ENCODE measurements at regions of chr18 and their contacts with region 1.

Region 1: DNA sequence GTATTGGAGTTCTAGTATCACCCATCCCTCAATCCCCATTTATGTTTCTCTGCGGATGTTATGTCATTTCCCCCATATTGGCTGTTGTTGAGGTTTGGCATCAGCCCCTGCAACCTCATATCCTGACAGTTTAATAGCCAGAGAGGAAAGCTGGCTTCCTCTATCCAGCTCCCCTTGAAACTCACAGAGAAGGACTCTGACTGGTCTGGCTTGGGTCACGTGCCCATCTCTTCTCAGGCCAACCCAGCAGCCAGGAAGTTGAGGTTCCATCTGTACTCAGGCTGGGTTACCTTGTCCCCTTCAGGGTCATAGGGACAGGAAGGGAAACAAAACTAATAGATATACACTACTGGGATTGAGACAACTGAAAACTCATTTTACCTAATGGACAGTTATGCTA is 148.0 kb upstream of the SLC14A2 start:
- DNase-seq: no peak

Region 2: GRCh38 chr18:45085916-45086624 is 381.2 kb before region 1 on chr18:
- intact Hi-C with region 1: loop called in 1 of 2 experiments (anchors 5 kb)
- DNase-seq: no peak

Region 3: DNA sequence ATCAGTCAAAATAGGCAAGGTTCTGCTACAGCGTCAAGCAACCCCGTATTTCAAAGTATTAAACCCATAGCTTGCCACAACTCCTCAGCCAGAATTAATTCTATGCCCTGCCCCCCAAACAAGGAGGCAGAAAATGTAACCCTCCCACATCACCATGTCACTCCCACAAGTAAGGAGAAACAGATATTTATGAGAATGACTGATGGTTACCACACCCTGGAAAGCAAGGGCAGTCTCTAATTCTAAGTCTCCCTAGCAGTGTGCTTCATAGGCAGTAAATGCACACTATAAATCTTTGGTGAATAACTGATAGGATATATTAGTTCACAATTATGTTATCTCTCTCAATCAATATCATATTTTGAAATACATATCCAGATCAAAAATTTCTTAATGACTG is 80.1 kb before region 1 on chr18:
- intact Hi-C with region 1: no loop called
- DNase-seq: no peak

Region 4: DNA sequence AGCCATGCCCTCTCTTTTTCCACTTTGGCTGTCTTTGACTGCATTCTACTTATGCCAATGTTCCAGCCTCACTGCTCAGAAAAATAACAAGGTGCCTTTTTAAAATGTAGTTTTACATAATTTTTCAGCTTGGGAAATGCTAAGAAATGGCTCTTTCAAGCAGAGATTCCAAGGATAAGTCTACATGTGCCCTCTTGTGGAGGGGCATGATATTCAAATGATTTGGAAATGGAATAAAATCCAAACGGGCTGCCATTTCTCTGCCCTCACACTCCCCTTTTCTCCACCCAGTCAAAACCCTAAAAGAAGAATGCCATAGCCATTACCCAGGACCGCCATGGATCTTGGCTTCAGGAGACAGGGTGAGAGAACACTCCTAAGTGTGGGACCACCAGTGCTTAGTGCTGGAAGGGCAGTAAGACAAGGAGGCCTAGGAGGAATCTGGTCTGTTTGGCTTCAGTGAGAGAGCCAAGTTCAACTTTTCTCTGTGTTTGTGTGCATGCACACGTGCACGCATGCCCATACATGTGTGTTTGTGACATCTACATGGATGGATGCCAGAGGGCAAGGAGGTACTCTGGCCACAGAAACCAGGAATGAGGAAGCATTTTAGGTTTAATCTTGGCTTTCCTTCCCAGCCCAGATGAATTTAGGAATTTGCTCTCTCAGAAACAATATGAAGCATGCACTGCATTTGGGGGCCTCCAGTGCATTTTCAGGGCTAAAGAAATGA is 26.0 kb before region 1 on chr18:
- intact Hi-C with region 1: no loop called
- DNase-seq: no peak

Region 5: GRCh38 chr18:45540125-45540524 is 72.8 kb after region 1 on chr18:
- intact Hi-C with region 1: no loop called
- DNase-seq: no peak